CD4-positive, alpha-beta memory T cell (primary cell): ENCODE measurements at regions of chr3 and their contacts with region 1.

Region 1: DNA sequence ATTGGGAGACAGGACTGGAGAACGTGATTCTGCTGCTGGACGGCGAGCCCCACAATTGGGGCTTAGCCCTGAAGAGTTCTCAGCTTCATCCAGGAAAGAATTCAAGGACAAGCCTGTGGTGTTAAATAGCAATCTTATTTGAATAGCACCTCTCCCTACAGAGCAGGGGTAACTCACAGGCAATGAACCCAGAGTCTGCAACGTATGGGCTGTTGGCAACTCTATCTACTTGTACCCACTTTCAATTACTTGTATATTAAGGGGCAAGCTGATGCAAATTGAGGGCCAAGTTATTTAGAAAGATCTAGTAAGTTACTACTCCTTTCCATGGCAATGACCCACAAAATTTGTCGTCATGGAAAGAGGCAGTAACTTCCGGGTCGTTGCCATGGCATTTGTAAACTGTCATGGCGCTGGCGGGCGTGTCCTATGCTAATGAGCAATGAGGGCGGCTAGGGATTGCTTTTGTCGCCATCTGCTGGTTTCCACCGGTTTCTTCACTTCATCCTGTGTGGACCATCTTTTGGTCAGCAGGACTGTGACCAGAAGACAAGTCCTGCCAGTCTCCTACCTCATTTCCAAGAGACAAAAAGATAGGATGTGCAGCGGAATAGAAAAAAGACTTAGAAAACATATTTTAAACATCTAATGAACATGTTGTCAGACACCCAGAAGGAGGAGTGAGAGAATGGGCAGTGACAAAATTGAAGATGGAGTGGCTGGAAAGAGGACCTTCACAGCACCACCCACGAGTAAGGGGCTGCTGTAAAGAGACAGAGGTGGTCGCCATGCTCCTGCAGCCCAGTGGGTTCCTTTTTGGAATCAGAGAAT is 45.8 kb upstream of the SH3BP5 start:
- DNase-seq: peak; percentile 94 to 97 (median 95)
- H3K4me3 ChIP-seq: no peak overlapping the region
- H3K4me3 Mint-ChIP-seq: peak overlapping the region in 5 of 8 donors; percentile 11 to 82 (median 22)
- H3K27ac ChIP-seq: peak overlapping the region; percentile 91
- H3K27ac Mint-ChIP-seq: peak overlapping the region; percentile 95 to 98 (median 97)
- H3K4me1 ChIP-seq: peaks cover 5% of the 10 kb centered on the region
- H3K4me1 Mint-ChIP-seq: peaks cover 9 to 10% (median 9%) of the 10 kb centered on the region in 4 donors
- H3K27me3 ChIP-seq: no peaks in the 10 kb centered on the region
- H3K27me3 Mint-ChIP-seq: peaks cover 0 to 1% of the 10 kb centered on the region in 2 donors

Region 2: DNA sequence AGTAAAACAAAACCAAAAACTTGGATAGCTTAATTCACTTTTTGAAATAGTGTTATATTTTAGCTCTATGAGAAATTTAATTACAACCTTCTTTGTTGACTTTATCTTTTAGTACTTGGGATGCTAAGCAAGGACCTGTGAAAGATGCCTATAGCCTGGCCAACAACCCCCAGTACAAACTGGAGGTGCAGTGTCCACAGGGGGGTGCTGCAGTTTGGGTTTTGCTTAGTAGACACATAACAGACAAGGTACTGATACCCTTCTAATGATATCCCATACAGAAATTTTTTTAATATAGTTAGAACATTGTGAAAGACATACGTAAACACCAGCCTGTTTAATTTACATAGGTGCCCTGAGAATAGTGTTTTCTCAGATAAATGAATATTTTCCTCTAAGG is 136.8 kb before region 1 on chr3:
- CTCF ChIA-PET with region 1: no interaction called
- POLR2A ChIA-PET with region 1: no interaction called
- intact Hi-C with region 1: loop called (anchors 1 kb)
- DNase-seq: peak; percentile 36 to 51 (median 44)
- H3K4me3 ChIP-seq: no peak overlapping the region
- H3K4me3 Mint-ChIP-seq: no peak overlapping the region
- H3K27ac ChIP-seq: no peak overlapping the region
- H3K27ac Mint-ChIP-seq: peak overlapping the region in 1 of 7 donors; percentile 73
- H3K4me1 ChIP-seq: no peaks in the 10 kb centered on the region
- H3K4me1 Mint-ChIP-seq: peaks cover 0 to 9% (median 4%) of the 10 kb centered on the region in 4 donors
- H3K27me3 ChIP-seq: no peaks in the 10 kb centered on the region
- H3K27me3 Mint-ChIP-seq: no peaks in the 10 kb centered on the region

Region 3: DNA sequence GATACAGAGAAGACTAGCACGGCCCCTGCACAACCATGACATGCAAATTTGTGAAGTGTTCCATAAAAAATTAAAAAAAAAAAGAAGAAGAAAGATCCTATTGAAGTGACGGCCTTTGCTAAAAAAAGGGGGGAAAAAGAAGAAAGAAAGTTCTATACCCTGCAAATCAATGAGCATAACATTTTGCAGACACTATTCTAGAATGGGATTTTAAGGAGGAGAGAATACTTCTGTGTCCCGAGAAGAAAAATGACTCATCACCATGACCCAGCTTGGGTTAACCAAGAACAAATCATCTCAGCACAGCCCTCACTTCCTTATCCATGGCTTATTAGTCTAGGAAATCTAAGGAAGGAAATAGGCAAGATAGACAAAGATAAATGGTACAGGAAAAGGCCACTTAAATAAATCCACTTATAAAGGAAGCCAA is 38.4 kb before region 1 on chr3:
- CTCF ChIA-PET with region 1: no interaction called
- POLR2A ChIA-PET with region 1: no interaction called
- intact Hi-C with region 1: no loop called
- DNase-seq: no peak
- H3K4me3 ChIP-seq: no peak overlapping the region
- H3K4me3 Mint-ChIP-seq: no peak overlapping the region
- H3K27ac ChIP-seq: no peak overlapping the region
- H3K27ac Mint-ChIP-seq: peak overlapping the region in 1 of 7 donors; percentile 41
- H3K4me1 ChIP-seq: peaks cover 15% of the 10 kb centered on the region
- H3K4me1 Mint-ChIP-seq: peaks cover 15 to 29% (median 21%) of the 10 kb centered on the region in 4 donors
- H3K27me3 ChIP-seq: no peaks in the 10 kb centered on the region
- H3K27me3 Mint-ChIP-seq: no peaks in the 10 kb centered on the region

Region 4: GRCh38 chr3:15361494-15362212 is 16.5 kb before region 1 on chr3:
- CTCF ChIA-PET with region 1: interaction called, 5 read pairs
- POLR2A ChIA-PET with region 1: no interaction called
- intact Hi-C with region 1: loop called (anchors 1 kb)
- DNase-seq: peak in 1 of 5 donors; percentile 39
- H3K4me3 ChIP-seq: no peak overlapping the region
- H3K4me3 Mint-ChIP-seq: peak overlapping the region in 7 of 8 donors; percentile 56 to 92 (median 73)
- H3K27ac ChIP-seq: peak overlapping the region; percentile 36
- H3K27ac Mint-ChIP-seq: peak overlapping the region; percentile 86 to 93 (median 89)
- H3K4me1 ChIP-seq: peaks cover 54% of the 10 kb centered on the region
- H3K4me1 Mint-ChIP-seq: peaks cover 28 to 59% (median 37%) of the 10 kb centered on the region in 4 donors
- H3K27me3 ChIP-seq: no peaks in the 10 kb centered on the region
- H3K27me3 Mint-ChIP-seq: no peaks in the 10 kb centered on the region

Region 5: GRCh38 chr3:15405448-15406050 is 27.4 kb after region 1 on chr3:
- CTCF ChIA-PET with region 1: interaction called, 12 read pairs
- POLR2A ChIA-PET with region 1: no interaction called
- intact Hi-C with region 1: no loop called
- DNase-seq: peak; percentile 49 to 61 (median 55)
- H3K4me3 ChIP-seq: no peak overlapping the region
- H3K4me3 Mint-ChIP-seq: no peak overlapping the region
- H3K27ac ChIP-seq: no peak overlapping the region
- H3K27ac Mint-ChIP-seq: peak overlapping the region in 4 of 7 donors; percentile 8 to 40 (median 24)
- H3K4me1 ChIP-seq: peaks cover 3% of the 10 kb centered on the region
- H3K4me1 Mint-ChIP-seq: peaks cover 7 to 22% (median 14%) of the 10 kb centered on the region in 4 donors
- H3K27me3 ChIP-seq: no peaks in the 10 kb centered on the region
- H3K27me3 Mint-ChIP-seq: no peaks in the 10 kb centered on the region

Region 6: DNA sequence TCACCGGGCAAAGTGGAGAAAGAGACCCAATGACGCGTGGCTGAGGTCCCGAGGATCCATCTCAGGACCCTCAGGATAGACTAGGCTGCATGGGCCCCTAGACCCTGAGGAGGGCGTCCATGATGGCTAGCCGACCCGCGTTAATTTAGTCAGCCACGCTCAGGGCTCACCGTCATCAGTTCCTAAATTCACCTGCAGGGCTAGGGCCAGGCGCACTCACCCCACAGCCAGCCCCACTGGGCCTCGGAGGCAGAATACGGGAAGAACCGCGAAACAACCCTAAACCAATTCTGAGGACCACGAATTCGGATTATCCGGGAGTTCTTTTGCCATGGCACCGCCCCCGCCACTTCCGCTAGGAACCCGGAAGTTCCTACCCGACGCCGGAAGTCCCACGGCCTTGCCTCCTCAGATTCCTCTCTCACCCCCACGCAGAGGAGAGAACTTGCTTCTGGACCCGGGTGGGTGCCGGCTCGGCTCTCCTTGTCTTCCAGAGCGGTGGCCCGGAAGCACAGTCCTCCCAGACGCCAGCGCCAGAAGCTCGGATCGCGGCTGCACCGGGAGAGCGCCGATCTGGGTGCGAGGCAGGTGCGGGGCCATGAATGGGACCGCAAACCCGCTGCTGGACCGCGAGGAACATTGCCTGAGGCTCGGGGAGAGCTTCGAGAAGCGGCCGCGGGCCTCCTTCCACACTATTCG is 49.2 kb after region 1 on chr3 and contains the starts of genes EAF1 and METTL6:
- CTCF ChIA-PET with region 1: no interaction called
- POLR2A ChIA-PET with region 1: no interaction called
- intact Hi-C with region 1: loop called (anchors 2 kb)
- DNase-seq: peak; percentile 81 to 87 (median 83)
- H3K4me3 ChIP-seq: peak within 1 kb of the TSS; percentile 99
- H3K4me3 Mint-ChIP-seq: peak within 1 kb of the TSS; percentile 88 to 99 (median 98)
- H3K27ac ChIP-seq: peak within 1 kb of the TSS; percentile 89
- H3K27ac Mint-ChIP-seq: peak within 1 kb of the TSS; percentile 83 to 98 (median 97)
- H3K4me1 ChIP-seq: peaks cover 52% of the 10 kb centered on the region
- H3K4me1 Mint-ChIP-seq: peaks cover 32 to 80% (median 59%) of the 10 kb centered on the region in 4 donors
- H3K27me3 ChIP-seq: no peaks in the 10 kb centered on the region
- H3K27me3 Mint-ChIP-seq: no peaks in the 10 kb centered on the region
- total RNA-seq, gene EAF1: 17.6 to 19.7 TPM
- total RNA-seq, gene METTL6: 17.3 to 17.4 TPM

Region 7: GRCh38 chr3:15601397-15602145 is 223.4 kb after region 1 on chr3 and contains the starts of genes BTD and HACL1:
- CTCF ChIA-PET with region 1: no interaction called
- POLR2A ChIA-PET with region 1: no interaction called
- intact Hi-C with region 1: loop called (anchors 1 kb)
- DNase-seq: peak; percentile 98 to 100 (median 99)
- H3K4me3 ChIP-seq: peak within 1 kb of the TSS; percentile 65 to 100
- H3K4me3 Mint-ChIP-seq: peak within 1 kb of the TSS; percentile 97 to 100 (median 100)
- H3K27ac ChIP-seq: peak within 1 kb of the TSS; percentile 83
- H3K27ac Mint-ChIP-seq: peak within 1 kb of the TSS; percentile 94 to 100 (median 99)
- H3K4me1 ChIP-seq: peaks cover 37% of the 10 kb centered on the region
- H3K4me1 Mint-ChIP-seq: peaks cover 32 to 70% (median 50%) of the 10 kb centered on the region in 4 donors
- H3K27me3 ChIP-seq: no peaks in the 10 kb centered on the region
- H3K27me3 Mint-ChIP-seq: no peaks in the 10 kb centered on the region
- total RNA-seq, gene BTD: 23.5 to 27.4 TPM
- total RNA-seq, gene HACL1: 37.6 to 44.4 TPM